GM12878 (cell line): ENCODE measurements at regions of chr15 and their contacts with region 1.

Region 1: GRCh38 chr15:39934397-39935071 is 619 bp downstream of the EIF2AK4 start:
- DNase-seq: no peak
- ATAC-seq: peak; percentile 32
- H3K4me3 ChIP-seq: peak overlapping the region; percentile 80
- H3K27ac ChIP-seq: peak overlapping the region; percentile 80
- H3K4me1 ChIP-seq: peaks cover 7% of the 10 kb centered on the region; the same call in 1 of the 2 replicates
- H3K27me3 ChIP-seq: no peaks in the 10 kb centered on the region
- CTCF ChIP-seq: no peak
- EP300 ChIP-seq: no peak
- POLR2A ChIP-seq: no peak
- RAD21 ChIP-seq: no peak

Region 2: DNA sequence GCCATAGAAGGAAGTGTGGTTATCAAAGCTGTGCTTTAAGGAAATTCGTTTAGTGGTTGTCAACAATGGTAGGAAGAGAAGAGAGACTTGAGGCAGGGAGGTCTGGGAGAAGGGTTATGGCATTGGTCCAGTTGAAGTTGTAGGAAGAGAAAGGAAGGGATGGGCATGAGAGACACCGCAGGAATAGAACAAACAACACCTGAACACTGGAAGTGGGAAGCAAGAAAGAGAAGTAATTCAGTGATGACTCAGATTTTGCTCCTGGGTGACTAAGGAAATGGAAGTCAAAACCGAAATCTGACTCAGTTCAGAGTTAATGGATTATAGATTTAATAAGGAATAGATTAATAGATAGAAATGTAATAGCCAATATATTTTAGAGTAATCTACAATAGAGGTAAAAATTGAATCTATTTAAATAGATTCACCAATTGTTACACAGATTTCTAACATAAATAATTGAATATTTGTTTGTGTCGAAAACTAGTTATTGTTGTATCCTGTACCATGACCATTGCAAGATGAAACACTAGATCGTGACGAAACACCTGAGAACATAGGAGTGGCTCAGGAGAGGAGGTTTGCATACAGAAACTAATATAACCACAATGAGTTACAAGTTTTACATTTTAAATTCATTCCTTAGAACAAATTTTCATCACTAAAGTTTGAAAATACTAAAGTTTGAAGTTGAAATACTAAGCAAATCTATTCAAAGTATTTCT is 317.6 kb before region 1 on chr15:
- CTCF ChIA-PET with region 1: no interaction called
- POLR2A ChIA-PET with region 1: no interaction called
- RAD21 ChIA-PET with region 1: no interaction called
- SMC1A ChIA-PET with region 1: no interaction called
- in situ Hi-C with region 1: no loop called
- intact Hi-C with region 1: no loop called
- DNase-seq: no peak
- ATAC-seq: peak; percentile 40
- H3K4me3 ChIP-seq: no peak overlapping the region
- H3K27ac ChIP-seq: no peak overlapping the region
- H3K4me1 ChIP-seq: no peaks in the 10 kb centered on the region
- H3K27me3 ChIP-seq: no peaks in the 10 kb centered on the region
- CTCF ChIP-seq: no peak
- EP300 ChIP-seq: no peak
- POLR2A ChIP-seq: no peak
- RAD21 ChIP-seq: no peak

Region 3: GRCh38 chr15:39782441-39783138 is 151.9 kb before region 1 on chr15 and contains the start of gene FSIP1:
- CTCF ChIA-PET with region 1: interaction called, 3 read pairs
- POLR2A ChIA-PET with region 1: interaction called, 3 read pairs
- RAD21 ChIA-PET with region 1: interaction called, 11 read pairs
- SMC1A ChIA-PET with region 1: interaction called, 7 read pairs
- in situ Hi-C with region 1: no loop called
- intact Hi-C with region 1: loop called (anchors 5 kb)
- DNase-seq: peak; percentile 86
- ATAC-seq: peak; percentile 98
- H3K4me3 ChIP-seq: peak within 1 kb of the TSS; percentile 97
- H3K27ac ChIP-seq: peak within 1 kb of the TSS; percentile 93
- H3K4me1 ChIP-seq: peaks cover 7% of the 10 kb centered on the region
- H3K27me3 ChIP-seq: no peaks in the 10 kb centered on the region
- CTCF ChIP-seq: no peak
- EP300 ChIP-seq: peak in 1 of 2 experiments; percentile 27; a peak in 1 of 4 replicates
- POLR2A ChIP-seq: peak; percentile 93
- RAD21 ChIP-seq: no peak
- polyA plus RNA-seq, gene FSIP1: 0.15 to 0.27 TPM

Region 4: DNA sequence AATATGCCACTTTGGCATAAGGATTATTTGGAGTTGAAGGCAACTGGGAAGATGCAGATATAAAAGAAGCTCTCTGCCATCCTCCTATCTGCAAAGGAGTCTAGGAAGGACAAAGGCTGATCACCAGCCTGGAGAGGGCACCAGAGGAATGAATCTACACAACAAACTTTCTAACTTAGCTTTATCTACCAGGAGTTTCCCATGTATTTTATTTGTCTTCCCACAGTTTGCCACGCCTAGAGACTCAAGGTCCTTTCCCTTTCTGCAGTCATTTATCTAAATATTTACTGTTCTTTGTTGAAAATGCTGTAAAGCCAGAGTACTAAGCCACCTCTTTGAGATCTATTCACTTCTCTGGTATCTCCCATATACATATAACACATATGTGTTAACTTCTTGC is 46.7 kb before region 1 on chr15:
- CTCF ChIA-PET with region 1: interaction called, 10 read pairs
- POLR2A ChIA-PET with region 1: no interaction called
- RAD21 ChIA-PET with region 1: no interaction called
- SMC1A ChIA-PET with region 1: interaction called, 4 read pairs
- in situ Hi-C with region 1: no loop called
- intact Hi-C with region 1: no loop called
- DNase-seq: no peak
- ATAC-seq: peak; percentile 75
- H3K4me3 ChIP-seq: no peak overlapping the region
- H3K27ac ChIP-seq: no peak overlapping the region
- H3K4me1 ChIP-seq: no peaks in the 10 kb centered on the region
- H3K27me3 ChIP-seq: no peaks in the 10 kb centered on the region; a peak in 1 of 4 replicates
- CTCF ChIP-seq: peak; percentile 20 to 55 (median 35); a peak in 4 of 6 replicates
- EP300 ChIP-seq: no peak
- POLR2A ChIP-seq: no peak
- RAD21 ChIP-seq: peak; percentile 26; the same call in 1 of the 2 replicates

Region 5: GRCh38 chr15:39920510-39921273 is 13.8 kb before region 1 on chr15:
- CTCF ChIA-PET with region 1: interaction called, 21 read pairs
- POLR2A ChIA-PET with region 1: interaction called, 11 read pairs
- RAD21 ChIA-PET with region 1: interaction called, 8 read pairs
- SMC1A ChIA-PET with region 1: interaction called, 65 read pairs
- in situ Hi-C with region 1: no loop called
- intact Hi-C with region 1: no loop called
- DNase-seq: peak; percentile 38
- ATAC-seq: peak; percentile 94
- H3K4me3 ChIP-seq: peak overlapping the region; percentile 73
- H3K27ac ChIP-seq: peak overlapping the region; percentile 39
- H3K4me1 ChIP-seq: peaks cover 5% of the 10 kb centered on the region
- H3K27me3 ChIP-seq: peaks cover 3 to 8% of the 10 kb centered on the region in 2 experiments; a peak in 3 of 4 replicates
- CTCF ChIP-seq: 0 out of 6 replicates have a peak, but pooled peaks of 2 of the 3 experiments have one; percentile 8 to 19
- EP300 ChIP-seq: no peak
- POLR2A ChIP-seq: peak; percentile 91
- RAD21 ChIP-seq: no peak

Region 6: GRCh38 chr15:40081691-40082194 is 147.2 kb after region 1 on chr15:
- CTCF ChIA-PET with region 1: no interaction called
- POLR2A ChIA-PET with region 1: no interaction called
- RAD21 ChIA-PET with region 1: no interaction called
- SMC1A ChIA-PET with region 1: no interaction called
- in situ Hi-C with region 1: no loop called
- intact Hi-C with region 1: no loop called
- DNase-seq: no peak
- ATAC-seq: peak; percentile 72
- H3K4me3 ChIP-seq: peak overlapping the region; percentile 12; the same call in 1 of the 2 replicates
- H3K27ac ChIP-seq: no peak overlapping the region; the same call in 1 of the 2 replicates
- H3K4me1 ChIP-seq: peaks cover 37% of the 10 kb centered on the region
- H3K27me3 ChIP-seq: no peaks in the 10 kb centered on the region
- CTCF ChIP-seq: no peak
- EP300 ChIP-seq: peak in 1 of 2 experiments; percentile 25; a peak in 1 of 4 replicates
- POLR2A ChIP-seq: no peak
- RAD21 ChIP-seq: no peak